CD14-positive monocyte (primary cell): ENCODE measurements at regions of chr12 and their contacts with region 1.

Region 1: GRCh38 chr12:89856431-89856830 is 147.8 kb upstream of the ATP2B1 start:
- DNase-seq: peak; percentile 80 to 93 (median 93)
- H3K4me3 ChIP-seq: peak overlapping the region in 1 of 3 experiments; percentile 37
- H3K4me3 Mint-ChIP-seq: peak overlapping the region in 1 of 2 donors; percentile 46
- H3K27ac ChIP-seq: peak overlapping the region in 1 of 2 donors; percentile 80
- H3K27ac Mint-ChIP-seq: peak overlapping the region; percentile 86 to 94 (median 90)
- H3K4me1 ChIP-seq: peaks cover 48 to 59% of the 10 kb centered on the region in 2 donors
- H3K4me1 Mint-ChIP-seq: peaks cover 61% of the 10 kb centered on the region
- H3K27me3 ChIP-seq: no peaks in the 10 kb centered on the region
- H3K27me3 Mint-ChIP-seq: peaks cover 0 to 3% (median 2%) of the 10 kb centered on the region in 3 donors
- CTCF ChIP-seq: no peak

Region 2: DNA sequence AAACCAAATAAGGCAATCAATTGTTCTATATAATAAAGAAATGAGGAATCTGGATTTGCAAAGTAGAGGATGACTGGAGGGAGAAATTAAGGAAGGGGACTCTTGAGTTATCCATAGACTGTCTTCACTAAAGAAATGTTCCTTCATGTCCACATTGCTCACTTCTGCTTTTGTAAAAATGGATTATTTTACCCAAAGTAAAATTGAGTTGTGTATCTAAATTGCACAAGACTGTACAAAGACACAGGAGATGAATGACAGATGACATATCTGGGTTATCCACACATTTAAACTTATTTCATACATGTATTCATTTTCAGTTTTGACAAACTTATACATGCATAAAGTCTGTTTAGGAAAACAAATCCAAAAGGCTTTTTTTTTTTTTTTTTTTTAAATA is 159.1 kb before region 1 on chr12:
- intact Hi-C with region 1: no loop called
- DNase-seq: peak; percentile 37 to 57 (median 38)
- H3K4me3 ChIP-seq: no peak overlapping the region
- H3K4me3 Mint-ChIP-seq: peak overlapping the region in 1 of 2 donors; percentile 31
- H3K27ac ChIP-seq: no peak overlapping the region
- H3K27ac Mint-ChIP-seq: peak overlapping the region in 6 of 7 donors; percentile 35 to 66 (median 52)
- H3K4me1 ChIP-seq: peaks cover 10 to 15% of the 10 kb centered on the region in 2 donors
- H3K4me1 Mint-ChIP-seq: peaks cover 35% of the 10 kb centered on the region
- H3K27me3 ChIP-seq: no peaks in the 10 kb centered on the region
- H3K27me3 Mint-ChIP-seq: no peaks in the 10 kb centered on the region
- CTCF ChIP-seq: no peak

Region 3: DNA sequence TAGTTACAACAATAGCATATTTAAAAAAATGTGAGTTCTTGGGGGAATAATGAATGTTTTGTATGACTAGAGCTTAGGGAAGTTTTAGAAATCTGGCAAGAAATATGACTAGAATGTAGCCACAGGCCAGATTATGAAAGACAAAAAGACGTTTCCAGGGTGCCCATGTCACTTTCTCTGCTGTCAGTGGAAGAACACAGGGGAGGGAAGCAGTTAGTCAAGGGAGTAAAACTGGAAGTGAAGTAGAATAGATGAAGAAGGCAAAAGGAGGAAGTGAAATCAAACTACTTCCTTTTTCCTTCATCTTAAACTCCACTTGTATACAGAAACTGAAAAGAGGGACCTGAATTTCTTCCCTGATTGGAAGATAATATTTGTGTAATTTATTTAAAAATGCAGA is 66.6 kb before region 1 on chr12:
- intact Hi-C with region 1: loop called in 1 of 2 experiments (anchors 10 kb)
- DNase-seq: peak; percentile 92 to 97 (median 97)
- H3K4me3 ChIP-seq: peak overlapping the region in 1 of 3 experiments; percentile 46
- H3K4me3 Mint-ChIP-seq: peak overlapping the region in 1 of 2 donors; percentile 54
- H3K27ac ChIP-seq: peak overlapping the region; percentile 81 to 84
- H3K27ac Mint-ChIP-seq: peak overlapping the region; percentile 88 to 96 (median 94)
- H3K4me1 ChIP-seq: peaks cover 32 to 38% of the 10 kb centered on the region in 2 donors
- H3K4me1 Mint-ChIP-seq: peaks cover 35% of the 10 kb centered on the region
- H3K27me3 ChIP-seq: no peaks in the 10 kb centered on the region
- H3K27me3 Mint-ChIP-seq: no peaks in the 10 kb centered on the region
- CTCF ChIP-seq: no peak

Region 4: DNA sequence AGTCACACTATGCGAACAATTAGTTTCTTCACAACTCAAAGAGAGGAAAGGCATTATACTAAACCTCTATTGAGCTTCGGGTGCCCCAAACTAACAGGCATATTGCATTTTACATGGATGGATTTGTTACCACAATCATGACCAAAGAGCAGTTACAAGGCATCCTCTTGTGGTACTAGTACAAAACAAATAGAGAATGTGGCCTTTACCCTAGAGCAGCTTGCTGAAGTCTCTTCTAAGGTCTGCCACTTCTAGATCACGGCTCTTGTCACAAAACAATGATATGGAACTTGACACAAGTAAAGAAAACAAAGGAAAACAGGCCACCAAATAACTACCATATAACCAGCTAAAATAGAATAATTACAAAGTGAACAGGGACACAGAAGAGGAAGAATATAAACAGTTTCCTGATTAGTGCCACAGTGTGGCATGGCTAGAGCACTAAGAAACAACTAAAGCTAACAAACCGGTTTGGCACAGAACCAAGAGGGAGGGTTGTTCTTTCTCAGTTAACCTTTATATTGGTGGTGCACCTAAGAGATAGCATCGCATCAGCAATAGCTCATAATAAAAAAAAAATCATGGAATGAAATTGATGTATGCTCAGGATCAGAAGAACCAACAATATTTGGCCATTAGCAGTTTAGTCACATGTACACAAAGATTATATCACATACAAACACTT is 61.9 kb after region 1 on chr12:
- intact Hi-C with region 1: loop called (anchors 10 kb)
- DNase-seq: no peak
- H3K4me3 ChIP-seq: no peak overlapping the region
- H3K4me3 Mint-ChIP-seq: no peak overlapping the region
- H3K27ac ChIP-seq: no peak overlapping the region
- H3K27ac Mint-ChIP-seq: peak overlapping the region in 1 of 7 donors; percentile 82
- H3K4me1 ChIP-seq: peaks cover 5 to 9% of the 10 kb centered on the region in 2 donors
- H3K4me1 Mint-ChIP-seq: peaks cover 6% of the 10 kb centered on the region
- H3K27me3 ChIP-seq: no peaks in the 10 kb centered on the region
- H3K27me3 Mint-ChIP-seq: no peaks in the 10 kb centered on the region
- CTCF ChIP-seq: no peak